ENCODE measurements at regions of chr10 and their contacts with region 1.

Region 1: DNA sequence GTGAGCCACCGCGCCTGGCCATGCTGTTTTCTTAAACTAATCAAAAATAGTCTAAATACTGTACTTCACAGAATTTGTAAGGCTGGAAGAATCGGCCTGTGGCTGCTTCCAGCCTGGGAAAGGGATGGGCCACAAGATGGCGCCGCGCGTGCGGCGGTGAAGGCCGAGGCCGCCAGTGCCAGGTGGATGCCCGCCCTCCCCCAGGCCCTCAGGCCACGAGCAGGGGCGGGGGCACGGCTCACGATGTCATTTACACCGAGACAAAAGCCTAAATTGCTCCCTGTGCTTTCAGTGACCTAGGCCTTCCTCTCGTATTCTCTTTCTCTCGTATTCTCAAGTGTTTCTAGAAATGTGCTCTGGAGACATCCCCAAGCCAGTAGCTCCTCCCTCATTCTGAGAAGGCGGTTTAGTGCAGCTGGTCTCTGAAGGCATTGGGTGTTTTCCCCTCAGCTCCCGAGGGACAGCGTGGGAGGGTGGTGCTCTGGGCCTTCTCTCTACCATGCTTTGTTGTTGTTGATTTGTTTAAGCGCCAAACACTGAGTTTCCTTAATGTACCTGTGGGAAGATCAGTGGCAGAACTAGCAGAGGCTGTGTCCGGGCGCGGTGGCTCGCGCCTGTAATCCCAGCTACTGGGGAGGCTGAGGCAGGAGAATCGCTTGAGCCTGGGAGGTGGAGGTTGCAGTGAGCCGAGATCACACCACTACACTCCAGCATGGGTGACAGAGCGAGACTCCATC is 68.4 kb downstream of the CDC123 start:
- DNase-seq: peak; percentile 85
- ATAC-seq: peak; percentile 93

Region 2: DNA sequence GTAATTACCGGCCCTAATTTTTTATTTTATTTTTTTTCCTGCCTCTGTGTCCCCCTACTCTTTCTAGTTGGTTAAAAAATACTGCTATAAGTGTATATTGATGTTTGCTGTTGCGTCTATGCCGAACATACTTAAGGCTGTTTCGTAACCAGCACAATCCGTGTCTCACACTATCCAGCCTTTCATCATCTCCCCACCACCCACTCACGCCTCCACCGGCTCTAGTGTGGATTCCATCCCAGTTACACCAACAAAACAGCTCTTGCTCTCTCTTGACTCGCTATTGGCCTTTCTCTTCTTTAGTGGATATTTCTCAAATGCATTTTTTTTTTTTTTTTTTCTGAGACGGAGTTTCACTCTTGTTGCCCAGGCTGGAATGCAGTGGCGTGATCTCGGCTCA is 14.9 kb after region 1 on chr10:
- intact Hi-C with region 1: no loop called
- DNase-seq: no peak
- ATAC-seq: no peak

Region 3: DNA sequence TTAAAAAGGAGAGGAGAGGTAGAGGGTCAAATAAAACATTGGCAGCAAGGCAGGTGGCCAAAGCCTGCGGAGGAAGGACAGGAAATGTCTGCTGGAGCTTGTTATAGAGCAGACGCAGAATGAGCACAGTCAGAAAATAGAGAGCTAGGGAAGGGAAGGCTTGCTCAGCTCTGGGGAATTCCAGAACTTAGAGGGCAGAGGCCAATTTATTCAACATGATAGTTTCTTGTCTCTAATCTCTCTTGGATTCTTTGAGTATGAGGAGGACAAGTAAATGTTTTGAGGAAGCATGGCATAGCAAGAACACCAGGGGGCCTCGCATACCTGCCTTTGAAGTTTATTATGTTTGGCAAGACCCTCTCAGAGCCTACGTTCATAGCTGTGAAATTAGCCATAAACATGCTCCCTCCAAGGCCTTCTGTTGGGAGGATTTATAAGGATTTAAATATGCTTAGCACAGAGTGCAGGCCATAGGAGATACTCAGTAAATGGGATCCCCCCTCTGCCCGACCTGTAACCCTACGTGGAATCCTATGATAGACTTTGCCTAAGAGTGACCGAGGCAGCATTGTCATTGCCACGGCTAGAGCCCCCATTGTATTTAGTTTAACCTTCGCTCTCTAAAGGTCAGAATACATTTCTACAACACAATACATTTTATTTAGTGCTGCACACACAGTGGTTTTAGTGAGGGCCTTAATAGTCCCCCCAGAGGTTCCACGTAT is 443.3 kb after region 1 on chr10:
- intact Hi-C with region 1: loop called (anchors 10 kb)
- DNase-seq: no peak
- ATAC-seq: peak; percentile 67

Measured in sciatic nerve (tissue), 2 donors.